ENCODE measurements at regions of chr1 and their contacts with region 1.

Region 1: DNA sequence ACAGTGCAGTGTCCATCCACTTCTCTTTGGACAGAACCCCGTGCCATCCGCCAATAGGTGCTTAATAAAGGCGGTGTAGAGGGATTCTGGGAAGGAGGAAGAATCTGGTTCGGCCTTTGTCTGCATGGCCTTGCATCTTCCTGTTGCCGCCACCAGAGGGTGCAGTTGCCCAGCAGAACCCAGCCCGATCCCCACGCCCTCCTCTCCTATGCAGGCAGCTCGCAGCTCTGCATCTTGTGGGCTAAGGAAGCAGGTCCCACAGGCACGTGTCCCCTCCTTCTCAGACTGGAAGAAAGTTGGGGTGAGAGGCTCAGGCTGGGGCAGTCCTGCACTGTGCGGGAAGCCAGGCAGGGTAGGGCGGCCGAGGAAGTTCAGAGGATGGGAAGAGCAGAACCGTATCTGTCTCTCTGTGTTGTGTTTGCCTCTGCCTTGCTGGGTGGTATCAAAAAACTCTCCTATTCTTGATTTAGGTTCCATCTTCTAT is 20.8 kb downstream of the NAV1 start:
- DNase-seq: peak; percentile 81 to 98 (median 87)

Region 2: DNA sequence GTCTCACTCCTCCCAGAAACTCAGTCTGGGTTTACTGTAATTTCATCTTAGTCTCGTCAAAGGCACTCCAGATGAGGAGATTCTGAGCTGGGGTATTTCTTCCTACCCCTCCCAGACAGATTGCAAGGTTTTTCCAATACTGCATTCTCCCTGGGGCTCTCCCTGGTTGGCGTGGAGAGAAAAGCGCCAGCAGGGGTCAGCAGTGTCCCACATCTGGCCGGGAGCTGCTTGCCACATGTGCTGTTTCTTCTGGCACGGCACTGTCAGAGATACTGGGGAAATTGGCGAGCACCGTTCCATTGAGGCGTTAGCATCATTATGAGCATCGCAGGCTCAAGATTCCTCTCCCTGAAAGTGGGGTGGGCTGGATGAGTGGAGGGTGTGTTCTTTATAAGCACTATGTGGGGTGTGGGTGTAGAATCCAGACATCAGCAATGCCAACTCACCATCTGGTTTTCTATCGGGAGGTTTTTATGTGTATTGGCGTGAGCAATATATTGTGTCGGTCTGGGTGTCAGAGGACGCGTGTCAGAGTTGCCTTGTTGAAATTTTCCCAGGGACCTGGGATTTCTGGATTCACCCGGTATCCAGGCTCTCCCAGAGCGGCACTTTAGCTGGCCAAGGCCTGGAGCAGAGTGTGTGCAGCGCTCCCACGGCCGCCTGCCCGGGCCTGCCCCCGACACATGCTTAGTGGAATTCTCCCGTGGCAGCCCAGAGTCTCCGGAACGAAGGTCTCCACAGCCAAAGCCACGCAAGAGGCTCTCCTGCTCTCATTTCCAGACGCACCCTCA is 28.8 kb before region 1 on chr1:
- intact Hi-C with region 1: loop called (anchors 2 kb)
- DNase-seq: peak; percentile 76 to 98 (median 88)

Region 3: GRCh38 chr1:201703621-201704439 is 144.1 kb after region 1 on chr1:
- intact Hi-C with region 1: loop called (anchors 1 kb)
- DNase-seq: peak; percentile 79 to 98 (median 90)

Region 4: GRCh38 chr1:201792534-201793305 is 233.0 kb after region 1 on chr1:
- intact Hi-C with region 1: loop called (anchors 5 kb)
- DNase-seq: peak; percentile 61 to 97 (median 86)

Measured in posterior cingulate gyrus (tissue), 11 donors.